H1 (cell line): ENCODE measurements at regions of chr10 and their contacts with region 1.

Region 1: GRCh38 chr10:103605359-103606095 is 112.0 kb downstream of the NEURL1 start:
- DNase-seq: peak; percentile 31 to 86
- H3K4me3 ChIP-seq: no peak overlapping the region
- H3K27ac ChIP-seq: no peak overlapping the region
- H3K4me1 ChIP-seq: no peaks in the 10 kb centered on the region
- H3K27me3 ChIP-seq: no peaks in the 10 kb centered on the region
- CTCF ChIP-seq: peak; percentile 75 to 93 (median 88)
- EP300 ChIP-seq: no peak
- POLR2A ChIP-seq: no peak
- RAD21 ChIP-seq: peak; percentile 81 to 88

Region 2: GRCh38 chr10:103592186-103593021 is 13.1 kb before region 1 on chr10:
- CTCF ChIA-PET with region 1: interaction called, 24 read pairs
- POLR2A ChIA-PET with region 1: no interaction called
- DNase-seq: peak; percentile 46 to 87
- H3K4me3 ChIP-seq: no peak overlapping the region
- H3K27ac ChIP-seq: no peak overlapping the region
- H3K4me1 ChIP-seq: peaks cover 0 to 2% (median 0%) of the 10 kb centered on the region in 4 experiments; a peak in 1 of 7 replicates
- H3K27me3 ChIP-seq: no peaks in the 10 kb centered on the region; a peak in 2 of 7 replicates
- CTCF ChIP-seq: peak; percentile 84 to 93 (median 88)
- EP300 ChIP-seq: no peak
- POLR2A ChIP-seq: no peak
- RAD21 ChIP-seq: peak; percentile 78 to 88

Region 3: DNA sequence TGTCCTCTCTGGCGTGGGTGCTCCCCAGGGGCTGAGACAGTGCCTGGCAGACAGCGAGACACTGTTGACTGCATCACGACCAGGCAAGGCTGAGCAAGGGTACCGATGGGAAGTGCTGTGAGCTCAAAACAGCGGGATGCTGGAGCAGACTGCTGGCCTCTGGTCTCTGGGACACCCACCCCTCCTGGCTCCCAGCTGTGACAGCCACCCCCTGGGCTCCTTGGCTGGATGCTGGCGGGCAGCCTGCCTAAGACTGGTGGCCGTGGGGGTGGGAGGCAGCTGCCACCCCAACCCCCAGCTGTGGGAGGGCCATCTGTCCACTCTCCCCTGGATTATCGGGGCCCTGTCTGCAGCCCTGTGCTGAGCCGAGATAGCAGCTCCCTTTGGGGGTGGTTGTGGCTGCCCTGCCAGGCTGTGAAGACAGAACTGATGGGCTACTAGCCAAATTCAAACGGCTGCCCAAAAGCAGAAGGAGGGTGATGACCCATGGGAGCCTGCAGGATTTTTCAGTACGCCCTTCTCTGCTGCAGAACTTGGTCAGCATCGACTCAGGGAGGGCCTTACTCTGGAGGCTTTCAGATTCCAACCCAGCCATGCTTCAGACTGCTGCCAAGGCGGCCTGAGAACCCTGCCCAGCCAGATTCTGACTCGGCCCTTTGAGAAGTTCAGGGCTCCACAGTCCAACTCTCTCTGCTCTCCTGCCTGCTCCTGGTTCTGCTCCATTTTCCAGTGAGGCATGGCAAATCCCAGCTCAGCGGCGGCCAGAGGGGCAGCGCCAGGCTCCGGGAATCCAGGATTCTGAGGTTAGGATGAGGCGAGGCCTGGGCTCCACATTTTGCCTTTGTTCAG is 13.3 kb after region 1 on chr10:
- CTCF ChIA-PET with region 1: interaction called, 68 read pairs
- POLR2A ChIA-PET with region 1: interaction called, 3 read pairs
- DNase-seq: no peak
- H3K4me3 ChIP-seq: no peak overlapping the region
- H3K27ac ChIP-seq: no peak overlapping the region
- H3K4me1 ChIP-seq: no peaks in the 10 kb centered on the region; a peak in 1 of 7 replicates
- H3K27me3 ChIP-seq: no peaks in the 10 kb centered on the region
- CTCF ChIP-seq: no peak
- EP300 ChIP-seq: no peak
- POLR2A ChIP-seq: no peak
- RAD21 ChIP-seq: no peak

Region 4: DNA sequence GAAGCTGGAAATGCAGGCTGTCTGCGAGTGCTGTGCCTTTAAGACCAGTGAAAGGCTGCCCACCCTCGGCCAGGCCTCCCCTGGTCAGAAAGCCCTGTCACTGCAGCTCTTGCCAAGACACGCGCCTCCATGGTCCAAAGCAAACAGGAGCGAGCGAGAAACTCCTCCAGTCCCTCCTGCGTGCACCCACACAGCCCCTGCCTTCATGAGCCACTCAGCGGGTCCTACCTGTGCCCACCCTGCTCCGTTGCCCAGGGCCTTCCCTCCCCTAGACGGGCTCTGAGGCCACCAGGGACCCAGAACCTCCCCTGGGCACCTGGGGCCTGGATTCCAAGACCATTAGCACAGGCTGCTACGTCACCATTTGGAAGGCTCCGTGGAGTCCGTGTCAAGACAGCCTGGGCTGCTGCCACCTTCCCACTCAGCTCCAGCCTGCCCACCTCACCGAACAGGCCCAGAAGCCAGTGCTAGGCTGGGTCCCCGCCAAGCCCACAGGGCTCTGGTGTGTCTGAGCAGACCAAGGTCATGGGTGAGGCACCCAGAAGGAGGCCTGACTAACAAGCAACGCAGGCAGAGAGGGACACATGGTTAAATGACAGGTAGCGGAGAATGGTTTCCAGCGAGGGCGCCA is 32.5 kb after region 1 on chr10:
- CTCF ChIA-PET with region 1: interaction called, 18 read pairs
- POLR2A ChIA-PET with region 1: no interaction called
- DNase-seq: no peak
- H3K4me3 ChIP-seq: no peak overlapping the region
- H3K27ac ChIP-seq: no peak overlapping the region
- H3K4me1 ChIP-seq: peaks cover 8 to 35% (median 27%) of the 10 kb centered on the region in 4 experiments
- H3K27me3 ChIP-seq: no peaks in the 10 kb centered on the region
- CTCF ChIP-seq: no peak
- EP300 ChIP-seq: no peak
- POLR2A ChIP-seq: no peak
- RAD21 ChIP-seq: no peak

Region 5: GRCh38 chr10:103652599-103653281 is 47.2 kb after region 1 on chr10:
- CTCF ChIA-PET with region 1: interaction called, 21 read pairs
- POLR2A ChIA-PET with region 1: no interaction called
- DNase-seq: no peak
- H3K4me3 ChIP-seq: no peak overlapping the region
- H3K27ac ChIP-seq: no peak overlapping the region
- H3K4me1 ChIP-seq: peaks cover 0 to 32% (median 19%) of the 10 kb centered on the region in 4 experiments; a peak in 6 of 7 replicates
- H3K27me3 ChIP-seq: no peaks in the 10 kb centered on the region
- CTCF ChIP-seq: no peak
- EP300 ChIP-seq: no peak
- POLR2A ChIP-seq: no peak
- RAD21 ChIP-seq: no peak

Region 6: DNA sequence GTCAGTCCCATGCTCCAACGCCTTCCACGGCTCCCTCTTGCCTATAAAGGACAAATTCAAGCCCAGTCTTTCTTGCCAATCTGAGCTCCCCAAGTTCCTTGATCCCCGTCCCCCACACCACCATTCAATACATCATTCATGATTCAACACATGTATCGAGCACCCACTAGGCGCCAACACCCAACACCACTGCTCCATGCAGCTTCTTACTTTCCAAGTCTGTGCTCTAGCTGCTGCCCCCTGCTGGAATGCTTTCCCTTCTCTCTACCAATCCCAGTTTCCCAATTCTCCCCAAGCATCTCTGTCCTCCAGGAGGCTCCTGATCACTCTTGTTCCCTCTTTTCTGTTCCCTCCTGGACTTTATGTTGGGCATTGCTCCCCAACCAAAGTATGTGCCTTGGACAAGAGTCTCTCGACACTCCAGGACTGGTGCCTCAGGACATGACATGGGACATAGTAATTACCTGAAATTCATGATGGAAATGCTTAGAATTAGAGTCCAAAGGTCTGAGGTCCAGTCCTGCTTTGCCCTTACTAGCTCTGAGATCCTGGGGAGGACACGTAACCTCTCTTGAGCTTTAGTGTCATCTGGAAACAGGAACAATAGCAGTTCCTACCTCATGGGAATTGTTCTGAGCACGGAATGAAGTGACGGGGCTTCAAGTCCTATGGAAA is 60.7 kb after region 1 on chr10:
- CTCF ChIA-PET with region 1: interaction called, 48 read pairs
- POLR2A ChIA-PET with region 1: interaction called, 4 read pairs
- DNase-seq: peak in 1 of 2 experiments; percentile 76
- H3K4me3 ChIP-seq: no peak overlapping the region
- H3K27ac ChIP-seq: no peak overlapping the region
- H3K4me1 ChIP-seq: peaks cover 10 to 27% (median 17%) of the 10 kb centered on the region in 4 experiments
- H3K27me3 ChIP-seq: no peaks in the 10 kb centered on the region; a peak in 1 of 7 replicates
- CTCF ChIP-seq: peak; percentile 43 to 71 (median 64)
- EP300 ChIP-seq: no peak
- POLR2A ChIP-seq: no peak
- RAD21 ChIP-seq: peak; percentile 26 to 58; a peak in 3 of 4 replicates